ENCODE measurements at regions of chr11 and their contacts with region 1.

Region 1: GRCh38 chr11:99020352-99021225 is at the start of gene CNTN5:
- DNase-seq: no peak
- ATAC-seq: peak; percentile 91
- H3K4me3 ChIP-seq: peak within 1 kb of the TSS; percentile 37 to 47
- H3K27ac ChIP-seq: no peak within 1 kb of the TSS
- H3K4me1 ChIP-seq: no peaks in the 10 kb centered on the region
- H3K27me3 ChIP-seq: peaks cover 44% of the 10 kb centered on the region
- CTCF ChIP-seq: peak; percentile 28
- total RNA-seq, gene CNTN5: not detected

Region 2: GRCh38 chr11:99632969-99633368 is 612.4 kb after region 1 on chr11:
- CTCF ChIA-PET with region 1: no interaction called
- POLR2A ChIA-PET with region 1: no interaction called
- in situ Hi-C with region 1: no loop called
- intact Hi-C with region 1: no loop called
- DNase-seq: no peak
- ATAC-seq: no peak
- H3K4me3 ChIP-seq: no peak overlapping the region
- H3K27ac ChIP-seq: no peak overlapping the region
- H3K4me1 ChIP-seq: no peaks in the 10 kb centered on the region
- H3K27me3 ChIP-seq: no peaks in the 10 kb centered on the region
- CTCF ChIP-seq: no peak

Region 3: GRCh38 chr11:99739464-99740089 is 719.0 kb after region 1 on chr11:
- CTCF ChIA-PET with region 1: no interaction called
- POLR2A ChIA-PET with region 1: no interaction called
- in situ Hi-C with region 1: no loop called
- intact Hi-C with region 1: loop called (anchors 1 kb)
- DNase-seq: peak; percentile 30
- ATAC-seq: no peak
- H3K4me3 ChIP-seq: no peak overlapping the region
- H3K27ac ChIP-seq: no peak overlapping the region
- H3K4me1 ChIP-seq: no peaks in the 10 kb centered on the region
- H3K27me3 ChIP-seq: no peaks in the 10 kb centered on the region
- CTCF ChIP-seq: peak; percentile 69; the same call in 1 of the 2 replicates